Activated naive CD4-positive, alpha-beta T cell treated with anti-CD3 and anti-CD28 coated beads, Interleukin-2, amount 10 ng/mL, durations not matched to agents 7 days and 5 days (primary cell): ENCODE measurements at regions of chr6 and their contacts with region 1.

Region 1: DNA sequence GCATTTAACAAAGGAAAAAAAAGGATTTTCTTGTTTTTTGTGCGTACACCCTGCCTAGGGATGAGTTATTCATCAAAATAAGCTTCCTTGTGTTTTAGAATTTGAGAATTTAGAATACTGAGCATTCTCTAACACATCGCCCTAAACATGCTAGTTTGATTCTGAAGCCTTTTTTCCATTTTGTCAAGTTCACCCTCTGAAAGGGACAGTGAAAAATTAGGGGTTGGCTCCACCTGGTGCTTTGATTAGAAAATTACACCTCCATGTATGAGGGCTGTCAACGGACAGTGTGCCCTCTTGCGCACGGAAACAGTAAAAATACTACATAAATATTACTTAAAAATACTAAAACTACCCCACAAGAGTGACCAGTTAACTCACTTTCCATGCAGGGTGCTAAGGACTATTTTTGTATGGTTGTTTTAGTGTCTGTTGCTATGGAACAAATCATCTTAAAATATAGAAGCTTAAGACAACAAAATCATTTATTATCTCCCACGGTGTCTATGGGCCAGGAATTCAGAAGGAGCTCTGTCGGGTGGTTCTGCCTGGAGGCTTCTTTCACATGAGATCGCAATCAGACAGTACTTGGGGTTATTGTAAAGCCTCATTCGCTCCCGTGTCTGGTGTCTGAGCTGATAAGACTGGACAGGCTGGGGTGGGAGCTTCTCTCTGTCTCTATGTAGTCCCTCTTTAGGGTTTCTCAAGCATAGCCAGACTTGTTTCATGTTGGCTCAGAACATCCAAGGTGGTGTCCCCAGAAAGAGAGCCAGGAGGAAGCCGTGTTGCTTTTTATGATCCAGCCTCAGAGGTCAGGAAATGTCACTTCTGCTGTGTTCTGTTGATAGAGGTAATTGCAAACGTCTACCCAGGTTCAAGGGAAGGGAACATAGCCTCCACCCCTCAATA is 41.1 kb upstream of the TMEM170B start:
- DNase-seq: peak; percentile 80
- H3K4me3 Mint-ChIP-seq: no peak overlapping the region
- H3K27ac Mint-ChIP-seq: no peak overlapping the region
- H3K4me1 Mint-ChIP-seq: no peaks in the 10 kb centered on the region
- H3K27me3 Mint-ChIP-seq: no peaks in the 10 kb centered on the region

Region 2: DNA sequence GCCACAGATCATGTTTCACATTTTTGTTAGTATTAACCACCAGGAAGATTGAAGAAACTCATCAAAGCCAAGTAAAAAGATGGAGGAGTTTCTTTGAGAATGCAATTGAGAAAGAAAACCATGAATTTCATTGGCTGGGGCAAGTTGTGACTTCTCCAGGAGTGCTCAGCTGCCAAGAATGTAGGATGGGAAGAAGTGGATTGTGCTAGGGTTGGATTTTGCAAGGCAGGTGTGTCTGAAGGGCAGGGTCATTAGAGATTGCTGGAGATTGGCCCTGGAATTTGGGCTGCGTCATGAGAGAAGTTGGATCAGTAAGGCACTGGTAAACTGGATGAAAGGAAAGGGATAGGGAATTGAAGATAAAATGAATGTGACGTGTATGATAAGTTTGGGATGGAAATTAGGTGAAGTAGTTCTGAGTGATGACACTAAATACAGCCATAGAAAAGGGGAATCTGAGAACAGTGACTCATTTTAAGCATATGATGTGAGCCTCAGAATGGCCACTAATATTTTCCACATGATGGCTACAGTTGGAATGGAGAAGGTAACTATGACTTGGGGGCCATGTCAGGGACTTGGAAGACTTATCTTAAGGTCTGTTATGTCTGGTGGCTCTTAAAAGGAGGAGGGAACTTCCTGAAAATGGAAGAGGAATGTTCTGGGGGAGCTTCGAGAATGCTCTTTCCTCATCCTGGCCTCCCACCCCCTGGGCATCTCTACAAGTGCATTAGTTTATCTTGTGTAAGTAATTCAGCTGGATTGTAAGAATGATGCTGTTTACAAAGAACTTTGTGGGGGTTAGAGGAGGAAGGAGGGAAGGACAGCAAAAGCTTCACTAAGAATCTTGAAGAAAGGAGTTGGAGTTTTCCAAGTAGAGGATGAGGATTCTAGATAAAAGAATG is 357.1 kb before region 1 on chr6:
- CTCF ChIA-PET with region 1: interaction called, 101 read pairs
- DNase-seq: no peak
- H3K4me3 Mint-ChIP-seq: no peak overlapping the region
- H3K27ac Mint-ChIP-seq: no peak overlapping the region
- H3K4me1 Mint-ChIP-seq: no peaks in the 10 kb centered on the region
- H3K27me3 Mint-ChIP-seq: peaks cover 13% of the 10 kb centered on the region

Region 3: GRCh38 chr6:11152581-11152980 is 343.8 kb before region 1 on chr6:
- CTCF ChIA-PET with region 1: interaction called, 101 read pairs
- DNase-seq: no peak
- H3K4me3 Mint-ChIP-seq: no peak overlapping the region
- H3K27ac Mint-ChIP-seq: no peak overlapping the region
- H3K4me1 Mint-ChIP-seq: peaks cover 8% of the 10 kb centered on the region
- H3K27me3 Mint-ChIP-seq: peaks cover 21% of the 10 kb centered on the region

Region 4: GRCh38 chr6:11353921-11354389 is 142.5 kb before region 1 on chr6:
- CTCF ChIA-PET with region 1: interaction called, 11 read pairs
- DNase-seq: peak; percentile 79
- H3K4me3 Mint-ChIP-seq: peak overlapping the region; percentile 6
- H3K27ac Mint-ChIP-seq: peak overlapping the region; percentile 86
- H3K4me1 Mint-ChIP-seq: peaks cover 61% of the 10 kb centered on the region
- H3K27me3 Mint-ChIP-seq: no peaks in the 10 kb centered on the region

Region 5: DNA sequence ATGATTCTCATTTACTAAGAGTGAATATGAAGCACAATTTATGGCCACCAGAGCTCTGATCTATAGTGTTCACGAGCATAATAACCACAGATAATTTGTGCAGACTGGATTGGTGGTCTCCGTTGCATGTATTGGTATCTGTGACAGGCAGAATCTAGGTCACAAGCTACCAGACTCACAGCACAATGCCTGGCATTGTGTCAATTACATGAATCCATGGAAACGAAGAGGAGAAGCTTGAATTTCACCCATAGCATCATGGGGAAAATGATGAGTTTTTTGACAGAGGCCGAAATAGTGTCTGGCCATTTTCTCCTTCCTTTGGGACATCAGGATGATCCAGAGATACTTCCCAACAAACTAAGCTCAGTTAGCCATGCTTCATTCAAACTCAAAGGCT is 11.1 kb before region 1 on chr6:
- CTCF ChIA-PET with region 1: interaction called, 20 read pairs
- DNase-seq: no peak
- H3K4me3 Mint-ChIP-seq: no peak overlapping the region
- H3K27ac Mint-ChIP-seq: no peak overlapping the region
- H3K4me1 Mint-ChIP-seq: no peaks in the 10 kb centered on the region
- H3K27me3 Mint-ChIP-seq: peaks cover 6% of the 10 kb centered on the region